Activated CD4-positive, alpha-beta T cell treated with anti-CD3 and anti-CD28 coated beads, Interleukin-2, amount 10 ng/mL, durations not matched to agents 7 days and 5 days (primary cell): ENCODE measurements at regions of chr11 and their contacts with region 1.

Region 1: GRCh38 chr11:66051766-66052663 is at the start of gene SF3B2:
- DNase-seq: peak; percentile 98
- H3K4me3 Mint-ChIP-seq: peak within 1 kb of the TSS; percentile 100
- H3K27ac Mint-ChIP-seq: peak within 1 kb of the TSS; percentile 95
- H3K4me1 Mint-ChIP-seq: peaks cover 40% of the 10 kb centered on the region
- H3K27me3 Mint-ChIP-seq: peaks cover 2% of the 10 kb centered on the region
- total RNA-seq, gene SF3B2: 217 to 223 TPM

Region 2: GRCh38 chr11:65850831-65851811 is 200.9 kb before region 1 on chr11:
- CTCF ChIA-PET with region 1: no interaction called
- POLR2A ChIA-PET with region 1: no interaction called
- DNase-seq: no peak
- H3K4me3 Mint-ChIP-seq: no peak overlapping the region
- H3K27ac Mint-ChIP-seq: peak overlapping the region; percentile 55
- H3K4me1 Mint-ChIP-seq: peaks cover 26% of the 10 kb centered on the region
- H3K27me3 Mint-ChIP-seq: no peaks in the 10 kb centered on the region

Region 3: DNA sequence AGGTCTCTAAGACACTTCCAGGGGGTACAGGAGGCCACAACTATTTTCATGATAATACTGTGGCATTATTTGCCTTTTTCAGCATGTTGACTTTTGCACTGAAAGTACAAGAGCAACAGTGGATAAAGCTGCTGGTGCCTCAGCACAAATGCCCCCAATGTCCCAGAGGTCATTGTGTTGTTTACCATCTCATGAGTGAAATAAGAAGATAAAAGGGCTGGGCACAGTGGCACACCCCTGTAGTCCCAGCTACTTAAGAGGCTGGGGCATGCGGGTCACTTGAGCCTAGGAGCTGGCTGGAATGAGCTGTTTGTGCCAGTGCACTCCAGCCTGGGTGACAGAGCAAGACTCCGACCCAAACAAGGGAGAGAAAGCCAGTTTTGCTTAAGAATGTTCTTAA is 143.9 kb after region 1 on chr11:
- CTCF ChIA-PET with region 1: no interaction called
- POLR2A ChIA-PET with region 1: interaction called, 14 read pairs
- DNase-seq: no peak
- H3K4me3 Mint-ChIP-seq: no peak overlapping the region
- H3K27ac Mint-ChIP-seq: no peak overlapping the region
- H3K4me1 Mint-ChIP-seq: peaks cover 1% of the 10 kb centered on the region
- H3K27me3 Mint-ChIP-seq: no peaks in the 10 kb centered on the region